ENCODE measurements at regions of chr17 and their contacts with region 1.

Region 1: GRCh38 chr17:57671667-57672632 is 73.1 kb downstream of the CCDC182 start:
- DNase-seq: peak; percentile 68 to 75 (median 72)
- ATAC-seq: peak; percentile 80
- H3K4me3 ChIP-seq: no peak overlapping the region
- H3K27ac ChIP-seq: no peak overlapping the region
- H3K4me1 ChIP-seq: peaks cover 6% of the 10 kb centered on the region
- H3K27me3 ChIP-seq: no peaks in the 10 kb centered on the region
- CTCF ChIP-seq: peak; percentile 63 to 84 (median 80)
- POLR2A ChIP-seq: no peak

Region 2: GRCh38 chr17:57130761-57131461 is 541.0 kb before region 1 on chr17:
- intact Hi-C with region 1: loop called (anchors 10 kb)
- DNase-seq: peak; percentile 88 to 94 (median 90)
- ATAC-seq: peak; percentile 94
- H3K4me3 ChIP-seq: no peak overlapping the region
- H3K27ac ChIP-seq: no peak overlapping the region
- H3K4me1 ChIP-seq: peaks cover 6% of the 10 kb centered on the region
- H3K27me3 ChIP-seq: no peaks in the 10 kb centered on the region
- CTCF ChIP-seq: peak; percentile 67 to 92 (median 78)
- POLR2A ChIP-seq: no peak

Region 3: GRCh38 chr17:57788725-57789124 is 116.8 kb after region 1 on chr17:
- intact Hi-C with region 1: no loop called
- DNase-seq: no peak
- ATAC-seq: no peak
- H3K4me3 ChIP-seq: no peak overlapping the region
- H3K27ac ChIP-seq: no peak overlapping the region
- H3K4me1 ChIP-seq: no peaks in the 10 kb centered on the region
- H3K27me3 ChIP-seq: no peaks in the 10 kb centered on the region
- CTCF ChIP-seq: no peak
- POLR2A ChIP-seq: no peak

Measured in body of pancreas (tissue), 4 donors.